ENCODE measurements at regions of chr14 and their contacts with region 1.

Region 1: DNA sequence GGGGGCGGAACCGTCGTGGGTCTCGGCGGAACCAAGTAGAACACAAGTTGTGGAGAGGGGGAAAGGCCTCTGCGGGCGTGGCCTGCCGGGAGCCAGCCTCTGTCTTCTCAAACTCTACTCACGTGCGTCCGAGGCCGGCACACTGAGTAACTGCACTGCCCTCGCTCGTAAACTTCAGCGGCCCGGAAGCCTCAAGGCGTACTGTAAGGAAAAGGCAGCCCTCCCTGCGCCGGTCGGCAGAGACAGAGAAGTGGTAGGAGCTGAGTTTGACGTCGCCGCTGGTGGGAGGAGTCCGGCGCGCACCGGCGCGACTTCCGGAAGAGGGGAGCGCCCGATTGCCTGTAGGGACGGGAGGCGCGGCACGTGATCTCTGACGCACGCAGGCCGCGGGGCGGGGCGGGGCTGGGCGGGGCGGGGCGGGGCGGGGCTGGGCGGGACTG is at the start of gene FBXO33:
- DNase-seq: peak; percentile 98 to 99
- ATAC-seq: peak; percentile 96
- H3K4me3 ChIP-seq: peak within 1 kb of the TSS; percentile 96 to 97
- H3K27ac ChIP-seq: peak within 1 kb of the TSS; percentile 74 to 100
- H3K4me1 ChIP-seq: peaks cover 2 to 11% of the 10 kb centered on the region in 2 donors
- H3K27me3 ChIP-seq: no peaks in the 10 kb centered on the region
- total RNA-seq, gene FBXO33: 13.0 to 14.3 TPM

Region 2: DNA sequence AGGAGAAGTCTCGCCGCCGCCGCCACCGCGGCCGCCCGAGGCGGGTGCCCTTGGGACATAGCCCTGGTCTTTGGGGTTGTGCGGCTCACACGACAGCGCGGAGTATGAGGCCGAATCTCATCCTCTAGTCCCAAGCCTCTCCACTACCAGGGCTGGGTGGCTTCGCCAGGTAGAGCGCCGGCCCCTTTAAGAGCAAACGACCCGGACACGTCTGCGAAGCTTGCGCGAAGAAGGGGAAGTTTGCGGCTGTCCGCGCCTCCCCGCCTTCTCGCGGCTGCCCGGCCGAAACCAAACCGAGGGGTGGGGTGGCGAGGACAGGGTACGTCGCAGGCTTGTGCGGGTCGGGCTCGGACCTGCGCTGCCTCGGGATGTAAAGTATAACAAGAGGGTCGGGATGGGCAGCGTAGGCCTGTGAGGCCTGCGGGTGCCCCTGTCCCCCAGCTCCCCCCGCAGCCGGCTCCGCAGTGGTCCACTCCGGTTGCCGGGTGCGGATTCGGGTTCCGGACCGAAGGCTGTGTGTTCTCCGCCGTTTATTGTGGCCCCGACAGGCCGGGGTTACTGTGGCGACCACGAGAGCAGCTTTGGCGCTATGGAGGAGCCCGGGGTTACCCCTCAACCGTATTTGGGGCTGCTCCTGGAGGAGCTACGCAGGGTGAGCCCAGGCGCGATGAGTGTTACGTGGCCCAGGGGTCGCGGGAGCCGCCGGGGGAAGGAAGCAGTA is 165.2 kb before region 1 on chr14:
- intact Hi-C with region 1: loop called in 1 of 2 experiments (anchors 10 kb)
- DNase-seq: peak; percentile 91 to 93
- ATAC-seq: peak; percentile 97
- H3K4me3 ChIP-seq: peak overlapping the region; percentile 63 to 86
- H3K27ac ChIP-seq: peak overlapping the region; percentile 47 to 68
- H3K4me1 ChIP-seq: no peaks in the 10 kb centered on the region
- H3K27me3 ChIP-seq: no peaks in the 10 kb centered on the region

Region 3: GRCh38 chr14:39673270-39673711 is 241.1 kb after region 1 on chr14:
- intact Hi-C with region 1: no loop called
- DNase-seq: no peak
- ATAC-seq: no peak
- H3K4me3 ChIP-seq: no peak overlapping the region
- H3K27ac ChIP-seq: no peak overlapping the region
- H3K4me1 ChIP-seq: no peaks in the 10 kb centered on the region
- H3K27me3 ChIP-seq: no peaks in the 10 kb centered on the region

Region 4: DNA sequence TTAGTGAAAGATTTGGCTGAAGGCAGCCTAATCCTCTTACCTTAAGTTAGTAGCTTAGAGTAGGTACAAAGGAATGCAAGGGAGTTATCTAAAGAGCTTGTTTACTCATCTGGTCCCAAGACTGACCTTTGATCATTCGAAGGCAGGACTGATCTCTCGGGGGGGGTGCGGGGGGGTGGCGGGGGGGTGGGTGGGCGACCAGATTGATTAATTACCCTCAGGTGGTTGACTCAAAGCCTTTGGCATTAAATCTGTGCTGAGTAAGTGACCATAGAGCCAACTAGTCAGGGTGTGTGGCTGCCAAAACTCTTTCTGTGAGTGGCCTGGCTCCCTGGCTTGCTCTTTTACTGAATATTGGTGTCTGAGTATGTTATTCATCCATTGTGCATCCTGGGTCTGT is 731.9 kb after region 1 on chr14:
- intact Hi-C with region 1: no loop called
- DNase-seq: no peak
- ATAC-seq: no peak
- H3K4me3 ChIP-seq: no peak overlapping the region
- H3K27ac ChIP-seq: no peak overlapping the region
- H3K4me1 ChIP-seq: no peaks in the 10 kb centered on the region
- H3K27me3 ChIP-seq: no peaks in the 10 kb centered on the region

Measured in aorta (tissue), 5 donors.